Endothelial cell of umbilical vein (primary cell): ENCODE measurements at regions of chr7 and their contacts with region 1.

Region 1: DNA sequence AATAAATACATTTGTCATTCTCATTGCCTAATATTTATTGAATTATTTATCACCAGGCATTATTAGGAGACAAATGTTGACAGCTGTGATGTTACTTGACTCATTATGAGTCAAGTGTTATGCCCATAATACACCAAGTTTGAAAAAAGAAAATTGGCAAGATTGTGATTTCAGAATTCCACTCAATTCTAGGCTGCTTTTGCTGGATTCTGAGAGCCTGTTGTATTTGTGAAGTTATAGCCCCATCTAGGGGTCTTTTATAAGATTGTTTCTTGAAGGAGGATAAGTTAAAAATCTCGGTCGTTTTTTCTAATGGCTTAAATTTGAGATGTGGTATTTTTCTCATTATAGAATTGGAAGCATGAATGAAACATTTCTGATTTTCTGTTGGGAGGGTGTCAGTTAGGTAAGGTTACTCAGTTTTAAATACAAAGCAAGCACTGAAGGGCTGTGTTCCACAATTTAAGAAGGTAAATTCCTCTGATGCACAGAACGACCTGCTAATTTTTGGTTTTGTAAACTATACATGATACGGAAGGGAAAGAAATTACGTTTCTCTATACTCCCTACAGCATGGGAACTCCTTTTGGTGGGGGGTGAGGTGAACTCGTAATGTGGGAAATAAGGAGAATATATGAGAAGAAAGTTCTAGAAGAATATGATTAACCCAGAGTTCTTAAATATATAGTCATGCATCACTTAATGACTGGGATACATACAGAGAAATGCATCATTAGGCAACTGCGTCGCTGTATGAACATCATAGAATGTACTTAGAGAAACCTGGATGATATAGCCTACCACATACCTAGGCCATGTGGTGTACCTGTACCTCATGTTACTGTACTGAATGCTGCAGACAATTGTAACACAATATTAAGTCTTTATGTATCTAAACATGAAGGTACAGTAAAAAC is 2.6 kb downstream of the STK31 start:
- DNase-seq: peak; percentile 58
- H3K4me3 ChIP-seq: no peak overlapping the region
- H3K27ac ChIP-seq: no peak overlapping the region
- H3K4me1 ChIP-seq: no peaks in the 10 kb centered on the region
- H3K27me3 ChIP-seq: no peaks in the 10 kb centered on the region
- CTCF ChIP-seq: peak; percentile 20 to 40
- POLR2A ChIP-seq: no peak

Region 2: GRCh38 chr7:23093546-23093945 is 619.1 kb before region 1 on chr7:
- CTCF ChIA-PET with region 1: no interaction called
- POLR2A ChIA-PET with region 1: no interaction called
- dilution Hi-C with region 1: no loop called
- intact Hi-C with region 1: loop called (anchors 5 kb)
- DNase-seq: no peak
- H3K4me3 ChIP-seq: no peak overlapping the region
- H3K27ac ChIP-seq: no peak overlapping the region
- H3K4me1 ChIP-seq: no peaks in the 10 kb centered on the region
- H3K27me3 ChIP-seq: peaks cover 0 to 4% of the 10 kb centered on the region in 2 experiments
- CTCF ChIP-seq: no peak
- POLR2A ChIP-seq: no peak

Region 3: DNA sequence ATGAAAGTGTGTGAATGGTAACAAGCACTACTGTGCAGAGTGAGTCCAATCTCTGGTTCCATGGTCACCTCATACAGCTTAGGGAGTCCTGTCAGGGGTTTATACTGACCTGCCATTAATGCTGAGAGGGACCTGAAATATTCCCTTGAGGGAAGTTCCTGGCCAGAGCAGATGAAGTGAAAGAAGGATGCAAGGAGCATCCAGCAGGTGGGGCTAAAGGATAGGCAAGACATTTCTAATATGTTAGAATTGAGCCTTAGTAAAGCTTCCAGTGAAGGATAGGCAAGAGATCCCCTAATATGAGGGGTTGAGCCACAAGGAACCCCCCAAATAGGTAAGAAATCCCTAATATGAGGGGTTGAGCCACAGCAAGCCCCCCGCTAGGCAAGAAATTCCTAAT is 58.1 kb before region 1 on chr7:
- CTCF ChIA-PET with region 1: interaction called, 11 read pairs
- POLR2A ChIA-PET with region 1: no interaction called
- dilution Hi-C with region 1: no loop called
- intact Hi-C with region 1: loop called (anchors 1 kb)
- DNase-seq: peak; percentile 35
- H3K4me3 ChIP-seq: no peak overlapping the region
- H3K27ac ChIP-seq: no peak overlapping the region
- H3K4me1 ChIP-seq: no peaks in the 10 kb centered on the region
- H3K27me3 ChIP-seq: no peaks in the 10 kb centered on the region
- CTCF ChIP-seq: peak; percentile 47 to 50
- POLR2A ChIP-seq: no peak

Region 4: GRCh38 chr7:23751852-23752251 is 39.2 kb after region 1 on chr7:
- CTCF ChIA-PET with region 1: no interaction called
- POLR2A ChIA-PET with region 1: no interaction called
- dilution Hi-C with region 1: no loop called
- intact Hi-C with region 1: no loop called
- DNase-seq: no peak
- H3K4me3 ChIP-seq: no peak overlapping the region
- H3K27ac ChIP-seq: no peak overlapping the region
- H3K4me1 ChIP-seq: no peaks in the 10 kb centered on the region
- H3K27me3 ChIP-seq: no peaks in the 10 kb centered on the region
- CTCF ChIP-seq: no peak
- POLR2A ChIP-seq: no peak

Region 5: DNA sequence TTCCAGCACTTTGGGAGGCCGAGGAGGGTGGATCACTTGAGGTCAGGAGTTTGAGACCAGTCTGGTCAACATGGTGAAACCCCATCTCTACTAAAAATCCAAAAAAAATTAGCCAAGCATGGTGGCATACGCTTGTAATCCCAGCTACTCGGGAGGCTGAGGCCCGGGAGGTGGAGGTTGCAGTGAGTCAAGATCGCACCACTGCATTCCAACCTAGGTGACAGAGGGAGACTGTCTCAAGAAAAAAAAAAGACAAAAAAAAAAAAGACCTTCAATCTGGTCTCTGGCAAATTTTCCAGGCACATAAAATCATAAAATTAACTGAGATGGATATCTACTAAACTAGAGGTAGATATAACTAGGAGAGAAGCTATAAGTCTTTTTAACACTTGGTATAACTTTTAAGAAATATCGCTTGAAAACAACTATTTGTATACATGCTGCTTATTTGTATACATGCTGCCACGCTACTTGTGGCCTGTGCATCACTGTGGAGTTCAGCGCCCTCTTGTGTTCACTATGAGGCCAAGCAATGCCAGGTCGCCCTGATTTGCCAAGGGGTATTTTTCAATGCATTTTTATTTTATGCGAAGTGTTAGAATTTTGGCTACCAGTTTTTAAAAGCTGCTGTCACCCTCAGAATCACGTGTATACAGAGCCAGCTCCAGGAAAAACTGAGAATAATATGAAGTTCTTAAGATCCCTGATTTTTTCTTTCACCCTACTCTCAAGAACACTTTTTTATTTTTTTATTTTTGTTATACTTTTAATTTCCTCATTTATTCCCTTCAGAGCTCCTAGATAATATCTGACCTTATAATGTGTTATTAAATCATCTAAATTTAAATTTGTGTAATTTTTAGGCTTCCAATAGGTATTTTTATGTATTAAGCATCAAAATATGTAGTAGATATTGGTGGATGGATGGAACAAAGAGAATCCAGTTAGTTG is 1385.7 kb after region 1 on chr7:
- CTCF ChIA-PET with region 1: no interaction called
- POLR2A ChIA-PET with region 1: no interaction called
- dilution Hi-C with region 1: no loop called
- intact Hi-C with region 1: loop called (anchors 5 kb)
- DNase-seq: peak; percentile 73
- H3K4me3 ChIP-seq: no peak overlapping the region
- H3K27ac ChIP-seq: no peak overlapping the region
- H3K4me1 ChIP-seq: peaks cover 2% of the 10 kb centered on the region
- H3K27me3 ChIP-seq: peaks cover 0 to 1% of the 10 kb centered on the region in 2 experiments
- CTCF ChIP-seq: peak; percentile 79 to 93
- POLR2A ChIP-seq: no peak